ENCODE measurements at regions of chr5 and their contacts with region 1.

Region 1: DNA sequence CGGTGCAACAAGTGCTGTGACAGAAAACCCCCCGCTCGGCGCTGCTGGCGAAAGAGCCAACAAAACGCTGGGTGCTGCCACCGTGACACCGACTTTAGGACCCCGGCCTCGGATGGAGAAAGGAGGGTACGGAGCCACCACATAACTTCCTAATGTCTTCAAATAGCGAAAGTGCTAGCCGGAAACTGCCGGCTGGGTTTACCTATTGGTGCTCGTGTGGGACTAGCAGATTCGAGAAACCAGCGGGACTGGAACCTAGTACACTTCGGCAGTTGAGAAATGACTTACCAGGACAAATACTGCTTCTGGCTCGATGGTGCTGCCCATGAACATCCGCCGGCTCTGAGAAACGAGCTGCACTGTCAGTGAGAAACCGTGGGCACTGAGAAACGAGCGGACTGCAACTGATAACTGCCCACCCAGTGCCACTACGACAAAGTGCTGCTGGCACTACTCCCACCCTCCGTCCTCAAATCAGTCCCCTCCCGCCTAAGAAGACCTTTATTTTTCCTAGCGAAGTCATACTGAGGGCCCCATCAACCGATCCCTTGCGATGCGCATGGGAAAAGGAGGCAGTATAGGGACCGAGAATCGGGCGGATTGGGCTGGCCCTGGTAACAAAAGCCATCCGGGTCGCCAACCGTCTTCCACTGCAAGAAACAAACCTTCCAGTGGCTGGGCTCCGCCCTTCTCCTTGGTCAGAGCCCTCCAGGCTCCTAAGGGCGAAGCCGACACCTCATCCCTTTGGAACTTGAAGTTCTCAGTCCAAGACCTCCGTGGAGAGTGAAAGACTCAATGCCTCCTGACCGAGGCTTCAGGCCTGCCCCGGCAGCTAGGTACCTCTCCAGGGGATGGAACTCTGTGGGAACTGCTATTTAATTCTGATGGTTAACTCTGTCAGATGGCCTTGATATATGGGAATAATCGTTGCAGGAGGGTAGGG is 27.0 kb upstream of the ANXA2R start:
- DNase-seq: peak; percentile 92
- H3K4me3 Mint-ChIP-seq: peak overlapping the region; percentile 98
- H3K27ac Mint-ChIP-seq: peak overlapping the region; percentile 98
- H3K4me1 Mint-ChIP-seq: peaks cover 36% of the 10 kb centered on the region
- H3K27me3 Mint-ChIP-seq: no peaks in the 10 kb centered on the region

Region 2: DNA sequence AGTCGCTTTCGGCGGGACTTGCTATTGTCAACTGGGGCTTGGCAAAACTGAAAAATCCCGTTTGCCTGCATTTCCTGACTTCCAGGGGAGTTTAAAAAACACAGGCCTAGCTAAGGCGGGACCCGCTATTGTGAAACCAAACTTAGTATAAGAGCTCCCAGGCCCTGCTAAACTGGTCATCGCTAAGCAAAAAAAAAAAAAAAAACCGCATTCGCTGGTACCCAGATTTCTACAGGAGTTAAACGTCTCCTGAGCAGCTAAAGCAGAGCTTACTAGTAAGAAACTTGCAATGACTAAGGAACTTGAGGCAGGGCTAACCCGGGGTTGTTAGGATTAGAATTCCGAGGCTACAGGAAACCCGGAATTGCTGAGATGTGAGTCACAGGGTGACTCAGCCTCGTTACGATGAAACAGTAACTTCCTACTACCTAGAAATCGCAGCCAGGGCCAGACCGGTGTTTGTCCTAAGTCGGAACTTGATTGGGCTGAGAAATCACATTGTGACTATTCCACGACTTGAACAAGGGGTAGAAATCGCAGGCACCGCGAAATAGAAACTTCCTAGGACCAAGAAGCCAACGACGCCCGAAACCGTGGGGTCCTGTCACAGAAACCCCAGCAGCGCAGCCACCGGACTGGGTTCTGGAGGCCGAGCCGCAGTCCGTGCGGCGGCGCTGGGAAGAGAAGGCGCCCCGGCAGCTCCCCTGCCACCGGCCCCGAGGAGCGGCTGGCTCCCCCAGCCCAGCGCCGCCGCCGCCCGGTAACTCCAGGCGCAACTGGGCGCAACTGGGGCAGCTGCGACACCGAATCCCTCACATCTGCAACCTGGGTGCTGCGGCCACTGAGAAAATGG is 116.4 kb before region 1 on chr5:
- CTCF ChIA-PET with region 1: no interaction called
- intact Hi-C with region 1: loop called (anchors 1 kb)
- DNase-seq: peak; percentile 83
- H3K4me3 Mint-ChIP-seq: peak overlapping the region; percentile 87
- H3K27ac Mint-ChIP-seq: peak overlapping the region; percentile 88
- H3K4me1 Mint-ChIP-seq: peaks cover 9% of the 10 kb centered on the region
- H3K27me3 Mint-ChIP-seq: no peaks in the 10 kb centered on the region

Region 3: DNA sequence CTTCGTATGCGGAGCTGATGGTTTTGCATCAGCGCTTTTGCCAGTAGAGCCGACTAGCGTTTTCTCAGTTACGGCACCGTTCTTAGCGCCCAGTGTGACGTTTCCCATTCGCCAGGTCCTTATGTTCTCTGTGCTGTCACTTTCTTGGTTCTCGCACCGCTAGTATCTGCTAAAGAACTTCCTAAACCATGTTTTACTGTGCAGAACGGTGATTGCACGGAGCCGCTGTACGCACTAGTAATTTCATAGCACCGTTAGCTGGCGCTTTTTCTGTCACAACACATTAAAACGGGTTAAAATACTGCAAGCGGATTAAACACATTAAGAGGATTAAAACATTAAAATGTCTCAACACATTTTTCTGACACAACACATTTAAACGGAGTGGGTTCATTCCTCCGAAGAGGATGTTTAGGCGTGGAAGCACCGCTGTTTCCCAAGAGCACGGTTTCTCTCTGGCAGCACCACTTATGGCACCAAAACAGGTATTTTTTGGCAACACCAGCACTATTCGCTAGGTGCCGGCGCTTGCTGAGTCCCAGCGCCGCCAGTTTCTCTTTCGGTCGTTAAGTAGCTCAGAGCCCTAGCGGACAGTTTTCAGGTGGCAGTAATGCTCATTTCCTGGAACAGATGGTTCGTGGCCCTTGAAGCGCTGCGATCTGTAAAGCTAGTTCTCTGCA is 47.3 kb before region 1 on chr5:
- CTCF ChIA-PET with region 1: interaction called, 17 read pairs
- intact Hi-C with region 1: loop called (anchors 1 kb)
- DNase-seq: peak; percentile 90
- H3K4me3 Mint-ChIP-seq: peak overlapping the region; percentile 97
- H3K27ac Mint-ChIP-seq: peak overlapping the region; percentile 99
- H3K4me1 Mint-ChIP-seq: peaks cover 37% of the 10 kb centered on the region
- H3K27me3 Mint-ChIP-seq: no peaks in the 10 kb centered on the region

Region 4: GRCh38 chr5:43305948-43306565 is 239.0 kb after region 1 on chr5:
- CTCF ChIA-PET with region 1: interaction called, 3 read pairs
- intact Hi-C with region 1: loop called (anchors 2 kb)
- DNase-seq: no peak
- H3K4me3 Mint-ChIP-seq: no peak overlapping the region
- H3K27ac Mint-ChIP-seq: peak overlapping the region; percentile 75
- H3K4me1 Mint-ChIP-seq: peaks cover 80% of the 10 kb centered on the region
- H3K27me3 Mint-ChIP-seq: no peaks in the 10 kb centered on the region

Region 5: GRCh38 chr5:43602461-43603343 is 535.6 kb after region 1 on chr5 and contains the start of gene NNT:
- CTCF ChIA-PET with region 1: no interaction called
- intact Hi-C with region 1: loop called (anchors 1 kb)
- DNase-seq: peak; percentile 74
- H3K4me3 Mint-ChIP-seq: peak within 1 kb of the TSS; percentile 87
- H3K27ac Mint-ChIP-seq: peak within 1 kb of the TSS; percentile 92
- H3K4me1 Mint-ChIP-seq: peaks cover 45% of the 10 kb centered on the region
- H3K27me3 Mint-ChIP-seq: no peaks in the 10 kb centered on the region
- total RNA-seq, gene NNT: 98.4 to 98.9 TPM